Activated naive CD4-positive, alpha-beta T cell treated with anti-CD3 and anti-CD28 coated beads for 36 hours (primary cell): ENCODE measurements at regions of chr14 and their contacts with region 1.

Region 1: GRCh38 chr14:23984891-23985602 is 3.7 kb upstream of the DHRS4L2 start:
- DNase-seq: no peak
- H3K4me3 Mint-ChIP-seq: no peak overlapping the region
- H3K27ac Mint-ChIP-seq: no peak overlapping the region
- H3K4me1 Mint-ChIP-seq: peaks cover 26% of the 10 kb centered on the region
- H3K27me3 Mint-ChIP-seq: no peaks in the 10 kb centered on the region

Region 2: DNA sequence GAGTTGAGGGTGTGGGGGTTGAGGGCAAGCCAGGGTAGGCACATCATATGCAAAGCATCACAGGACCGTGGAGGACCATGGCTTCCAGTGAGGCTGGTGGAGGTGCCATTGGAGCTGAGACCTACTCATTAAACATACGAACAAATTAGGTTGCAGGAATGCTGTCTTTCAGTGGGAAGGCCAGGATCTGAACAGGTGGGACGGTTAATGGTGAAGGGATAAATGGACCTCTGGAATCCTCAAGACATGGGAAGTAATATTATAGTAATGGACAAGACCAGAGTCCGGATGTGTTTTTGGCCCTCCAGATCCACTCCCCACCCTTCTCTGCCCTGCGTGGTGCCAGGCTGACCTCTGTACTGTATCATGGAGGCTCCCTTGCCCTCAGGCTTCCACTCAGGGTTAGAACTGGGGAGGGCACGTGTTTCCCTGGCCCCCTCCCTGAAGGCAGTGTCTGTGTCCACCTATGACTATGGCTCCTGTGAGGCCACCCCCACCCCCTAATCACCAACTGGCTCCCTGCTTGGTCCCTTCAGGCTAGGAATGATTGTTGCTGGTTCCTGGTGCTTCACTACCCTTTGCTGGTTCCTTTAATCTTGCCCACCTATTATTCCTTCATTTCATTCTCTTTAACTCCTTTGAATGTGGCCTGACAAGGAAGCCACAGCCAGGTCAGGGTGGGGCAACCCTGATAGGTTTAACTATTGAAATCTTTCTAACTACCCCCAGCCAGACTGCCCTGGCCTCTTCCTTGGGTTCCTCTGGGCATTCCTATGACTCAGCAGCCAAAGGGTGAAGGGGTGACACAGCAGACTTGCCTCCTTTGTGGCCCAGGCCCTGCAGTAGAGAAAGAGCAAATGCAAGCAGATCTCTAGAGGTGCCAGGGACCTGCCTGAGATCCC is 338.1 kb before region 1 on chr14:
- CTCF ChIA-PET with region 1: no interaction called
- intact Hi-C with region 1: no loop called
- DNase-seq: no peak
- H3K4me3 Mint-ChIP-seq: no peak overlapping the region
- H3K27ac Mint-ChIP-seq: no peak overlapping the region
- H3K4me1 Mint-ChIP-seq: no peaks in the 10 kb centered on the region
- H3K27me3 Mint-ChIP-seq: no peaks in the 10 kb centered on the region

Region 3: DNA sequence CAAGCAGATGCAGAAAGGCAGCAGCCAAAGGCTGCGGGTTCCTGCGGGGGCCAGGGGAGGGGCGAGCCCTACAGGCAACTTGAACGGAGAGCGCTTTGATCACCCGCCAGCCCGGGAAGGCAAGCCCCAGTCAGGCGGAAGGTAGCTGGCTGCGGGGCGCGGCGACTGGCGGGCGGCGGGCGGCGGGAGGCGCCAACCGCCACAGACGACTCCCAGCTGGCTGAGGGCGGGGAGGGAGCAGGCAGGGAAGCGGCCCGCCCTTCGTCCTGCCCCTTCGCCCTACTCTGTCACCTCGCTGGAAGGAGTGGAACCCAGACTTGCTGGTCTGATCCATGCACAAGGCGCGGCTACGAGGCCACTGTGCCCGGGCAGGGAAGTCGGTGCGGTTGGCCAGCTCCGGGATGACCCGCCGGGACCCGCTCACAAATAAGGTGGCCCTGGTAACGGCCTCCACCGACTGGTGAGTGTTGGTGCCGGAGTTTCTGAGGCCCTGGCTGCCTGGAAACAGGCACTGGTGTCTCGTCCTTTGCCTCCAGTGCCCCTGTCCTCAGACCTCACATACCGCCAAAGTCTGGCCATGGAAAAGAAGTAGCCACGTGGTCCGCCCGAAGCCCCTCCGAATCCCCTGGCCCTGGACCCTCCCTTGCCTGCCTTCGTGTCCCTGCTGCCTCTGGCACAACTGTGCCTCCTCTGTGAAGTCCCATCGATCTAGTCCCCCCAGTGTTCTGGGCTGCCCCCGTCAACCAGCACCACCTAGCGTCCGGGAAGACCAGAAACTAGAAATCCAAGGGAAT is 51.3 kb after region 1 on chr14:
- CTCF ChIA-PET with region 1: interaction called, 3 read pairs
- intact Hi-C with region 1: loop called (anchors 1 kb)
- DNase-seq: peak; percentile 78
- H3K4me3 Mint-ChIP-seq: peak overlapping the region; percentile 91
- H3K27ac Mint-ChIP-seq: peak overlapping the region; percentile 83
- H3K4me1 Mint-ChIP-seq: peaks cover 5% of the 10 kb centered on the region
- H3K27me3 Mint-ChIP-seq: no peaks in the 10 kb centered on the region

Region 4: GRCh38 chr14:24051789-24052655 is 67.0 kb after region 1 on chr14 and contains the start of gene CARMIL3:
- CTCF ChIA-PET with region 1: interaction called, 3 read pairs
- intact Hi-C with region 1: loop called (anchors 1 kb)
- DNase-seq: peak; percentile 60
- H3K4me3 Mint-ChIP-seq: peak within 1 kb of the TSS; percentile 65
- H3K27ac Mint-ChIP-seq: peak within 1 kb of the TSS; percentile 28
- H3K4me1 Mint-ChIP-seq: peaks cover 18% of the 10 kb centered on the region
- H3K27me3 Mint-ChIP-seq: peaks cover 2% of the 10 kb centered on the region
- total RNA-seq, gene CARMIL3: 0.48 to 0.99 TPM

Region 5: DNA sequence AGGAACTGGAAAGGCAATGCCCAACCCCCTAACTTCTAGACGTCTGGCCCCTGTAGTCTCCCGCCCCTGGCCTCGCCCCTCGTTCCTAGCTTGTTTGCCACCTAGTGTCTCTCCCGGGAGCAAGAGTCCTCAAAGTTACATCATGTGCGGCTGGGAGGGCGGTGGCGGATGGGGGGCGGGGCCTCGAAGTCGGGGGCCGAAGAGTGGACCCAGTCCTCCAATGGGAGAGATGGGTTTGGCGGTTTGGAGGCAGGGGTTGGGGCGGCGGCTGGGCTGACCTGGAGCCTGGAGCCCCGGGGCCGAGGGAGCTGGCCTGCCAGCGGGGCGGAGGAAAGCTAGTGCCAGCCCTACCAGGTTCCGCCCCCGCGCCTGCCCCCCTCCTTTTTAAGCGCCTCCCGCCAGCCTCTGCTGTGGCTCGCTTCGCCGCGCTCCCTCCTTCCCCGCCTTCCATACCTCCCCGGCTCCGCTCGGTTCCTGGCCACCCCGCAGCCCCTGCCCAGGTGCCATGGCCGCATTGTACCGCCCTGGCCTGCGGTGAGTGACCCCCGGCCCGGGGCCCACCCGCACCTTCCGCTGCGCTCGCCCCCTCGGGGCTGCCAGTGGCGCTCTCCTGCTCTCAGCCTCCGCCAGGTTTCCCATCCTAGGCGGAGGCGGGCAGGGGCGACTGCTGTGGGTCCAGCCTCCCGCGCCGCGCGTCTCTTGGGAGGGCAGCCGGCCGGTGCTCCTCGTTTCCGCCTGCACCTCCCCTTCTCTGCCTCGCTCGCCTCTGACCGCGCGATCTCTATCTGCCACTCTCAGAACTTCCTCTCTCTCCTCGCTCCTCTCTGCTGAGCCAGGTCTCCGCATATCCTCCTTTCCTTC is 109.1 kb after region 1 on chr14 and contains the start of gene PCK2:
- CTCF ChIA-PET with region 1: no interaction called
- intact Hi-C with region 1: loop called (anchors 2 kb)
- DNase-seq: peak; percentile 94
- H3K4me3 Mint-ChIP-seq: peak within 1 kb of the TSS; percentile 99
- H3K27ac Mint-ChIP-seq: peak within 1 kb of the TSS; percentile 98
- H3K4me1 Mint-ChIP-seq: peaks cover 32% of the 10 kb centered on the region
- H3K27me3 Mint-ChIP-seq: no peaks in the 10 kb centered on the region
- total RNA-seq, gene PCK2: 117 TPM